CD8-positive, alpha-beta memory T cell (primary cell): ENCODE measurements at regions of chr16 and their contacts with region 1.

Region 1: GRCh38 chr16:30445408-30446202 is at the start of gene SEPHS2:
- DNase-seq: peak; percentile 91 to 98 (median 92)
- H3K4me3 ChIP-seq: peak within 1 kb of the TSS; percentile 92
- H3K4me3 Mint-ChIP-seq: peak within 1 kb of the TSS; percentile 88 to 97 (median 95)
- H3K27ac ChIP-seq: peak within 1 kb of the TSS; percentile 93
- H3K27ac Mint-ChIP-seq: peak within 1 kb of the TSS; percentile 87 to 96 (median 94)
- H3K4me1 ChIP-seq: peaks cover 40% of the 10 kb centered on the region
- H3K4me1 Mint-ChIP-seq: peaks cover 37 to 50% (median 45%) of the 10 kb centered on the region in 3 donors
- H3K27me3 ChIP-seq: no peaks in the 10 kb centered on the region
- H3K27me3 Mint-ChIP-seq: peaks cover 0 to 1% of the 10 kb centered on the region in 2 donors
- total RNA-seq, gene SEPHS2: 68.2 to 71.0 TPM

Region 2: DNA sequence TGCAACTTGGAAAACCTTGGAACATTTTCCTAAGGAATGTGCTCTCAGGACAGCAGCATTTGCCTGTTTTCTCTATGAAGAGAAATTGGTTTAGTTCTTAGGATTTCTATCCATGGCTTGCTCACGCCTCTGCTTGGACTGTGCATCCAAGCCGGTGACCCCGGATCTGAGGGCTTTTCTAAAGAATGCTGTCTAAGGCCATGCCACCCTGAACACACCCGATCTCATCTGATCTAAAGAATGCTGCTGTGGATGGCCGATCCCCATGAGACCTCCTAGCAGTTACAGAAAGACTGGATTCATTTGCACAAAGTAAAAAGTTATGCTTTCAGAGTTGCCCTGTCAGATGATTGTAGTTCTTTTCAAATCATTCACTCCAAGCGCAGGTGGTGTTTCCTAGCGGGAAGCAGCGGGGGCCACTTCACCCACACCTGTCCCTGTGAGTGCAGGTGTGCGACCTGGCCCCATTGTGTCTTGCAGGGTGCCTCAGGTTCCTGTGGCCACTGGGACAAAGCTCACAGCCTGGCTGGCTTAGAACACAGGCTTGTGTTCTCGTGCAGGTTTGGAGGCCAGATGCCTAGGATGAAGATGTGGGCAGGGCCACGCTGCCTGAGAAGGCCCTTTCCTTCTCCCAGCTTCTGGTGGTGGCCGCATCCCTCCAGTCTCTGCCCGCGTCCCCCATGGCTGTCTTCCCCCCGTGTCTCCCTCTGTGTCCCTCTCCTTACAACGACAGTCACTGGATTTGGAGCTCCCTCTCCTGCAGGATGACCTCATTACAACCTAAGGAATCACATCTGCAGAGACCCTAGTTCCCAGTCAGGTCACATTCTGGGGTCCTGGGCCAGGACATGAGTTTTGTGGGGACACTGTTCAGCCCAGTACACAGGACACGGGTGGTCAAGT is 1129.7 kb before region 1 on chr16:
- CTCF ChIA-PET with region 1: no interaction called
- POLR2A ChIA-PET with region 1: no interaction called
- DNase-seq: no peak
- H3K4me3 ChIP-seq: no peak overlapping the region
- H3K4me3 Mint-ChIP-seq: no peak overlapping the region
- H3K27ac ChIP-seq: no peak overlapping the region
- H3K27ac Mint-ChIP-seq: peak overlapping the region in 1 of 8 donors; percentile 19
- H3K4me1 ChIP-seq: no peaks in the 10 kb centered on the region
- H3K4me1 Mint-ChIP-seq: no peaks in the 10 kb centered on the region
- H3K27me3 ChIP-seq: no peaks in the 10 kb centered on the region
- H3K27me3 Mint-ChIP-seq: no peaks in the 10 kb centered on the region

Region 3: GRCh38 chr16:29805378-29806098 is 640.1 kb before region 1 on chr16:
- CTCF ChIA-PET with region 1: no interaction called
- POLR2A ChIA-PET with region 1: no interaction called
- DNase-seq: peak; percentile 97 to 99 (median 97)
- H3K4me3 ChIP-seq: peak overlapping the region; percentile 87
- H3K4me3 Mint-ChIP-seq: peak overlapping the region; percentile 93 to 100 (median 98)
- H3K27ac ChIP-seq: peak overlapping the region; percentile 95
- H3K27ac Mint-ChIP-seq: peak overlapping the region; percentile 94 to 100 (median 99)
- H3K4me1 ChIP-seq: peaks cover 36% of the 10 kb centered on the region
- H3K4me1 Mint-ChIP-seq: peaks cover 41 to 47% (median 47%) of the 10 kb centered on the region in 3 donors
- H3K27me3 ChIP-seq: no peaks in the 10 kb centered on the region
- H3K27me3 Mint-ChIP-seq: peaks cover 0 to 4% of the 10 kb centered on the region in 2 donors

Region 4: DNA sequence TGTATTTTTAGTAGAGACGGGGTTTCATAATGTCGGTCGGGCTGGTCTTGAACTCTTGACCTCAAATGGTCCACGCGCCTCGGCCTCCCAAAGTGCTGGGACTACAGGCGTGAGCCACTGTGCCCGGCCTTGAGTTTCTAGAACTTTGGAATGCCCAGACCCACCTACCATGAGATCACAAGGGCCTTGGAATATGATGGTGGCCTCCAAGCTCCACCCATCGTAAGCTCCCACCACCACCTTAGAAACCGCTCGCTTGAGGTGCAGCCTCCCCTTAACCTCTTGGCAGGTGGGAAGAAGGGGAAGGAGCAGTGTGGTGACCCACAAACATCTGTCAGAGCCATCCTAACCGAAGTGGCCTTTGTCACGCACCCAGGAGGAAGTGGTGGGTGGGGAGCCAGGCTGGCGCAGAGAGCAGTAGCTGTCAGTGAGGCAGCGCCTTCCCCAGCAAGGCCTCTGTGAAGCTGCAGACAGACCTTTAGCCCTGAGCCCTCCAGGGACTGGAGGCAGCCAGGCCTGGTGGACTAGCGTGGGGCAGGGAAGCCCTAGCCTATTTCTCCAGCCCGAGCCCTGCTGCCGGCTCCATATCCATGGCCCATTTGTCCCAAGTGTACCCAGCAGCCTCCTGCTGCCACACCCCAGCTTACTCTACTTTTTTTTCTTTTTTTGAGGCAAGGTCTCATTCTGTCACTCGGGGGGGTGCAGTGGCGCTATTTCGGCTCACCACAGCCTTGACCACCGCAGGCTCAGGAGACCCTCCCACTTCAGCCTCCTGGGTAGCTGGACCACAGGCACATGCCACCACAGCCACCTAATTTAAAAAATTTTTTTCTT is 13.2 kb after region 1 on chr16:
- CTCF ChIA-PET with region 1: interaction called, 32 read pairs
- POLR2A ChIA-PET with region 1: interaction called, 15 read pairs
- DNase-seq: peak; percentile 50 to 89 (median 71)
- H3K4me3 ChIP-seq: peak overlapping the region; percentile 18
- H3K4me3 Mint-ChIP-seq: peak overlapping the region; percentile 41 to 82 (median 70)
- H3K27ac ChIP-seq: no peak overlapping the region
- H3K27ac Mint-ChIP-seq: peak overlapping the region; percentile 68 to 95 (median 89)
- H3K4me1 ChIP-seq: peaks cover 25% of the 10 kb centered on the region
- H3K4me1 Mint-ChIP-seq: peaks cover 41 to 72% (median 63%) of the 10 kb centered on the region in 3 donors
- H3K27me3 ChIP-seq: no peaks in the 10 kb centered on the region
- H3K27me3 Mint-ChIP-seq: no peaks in the 10 kb centered on the region

Region 5: GRCh38 chr16:30482366-30482765 is 36.8 kb after region 1 on chr16:
- CTCF ChIA-PET with region 1: interaction called, 28 read pairs
- POLR2A ChIA-PET with region 1: interaction called, 6 read pairs
- DNase-seq: no peak
- H3K4me3 ChIP-seq: no peak overlapping the region
- H3K4me3 Mint-ChIP-seq: peak overlapping the region in 5 of 7 donors; percentile 2 to 57 (median 26)
- H3K27ac ChIP-seq: no peak overlapping the region
- H3K27ac Mint-ChIP-seq: peak overlapping the region; percentile 34 to 90 (median 77)
- H3K4me1 ChIP-seq: peaks cover 38% of the 10 kb centered on the region
- H3K4me1 Mint-ChIP-seq: peaks cover 42 to 69% (median 57%) of the 10 kb centered on the region in 3 donors
- H3K27me3 ChIP-seq: no peaks in the 10 kb centered on the region
- H3K27me3 Mint-ChIP-seq: no peaks in the 10 kb centered on the region

Region 6: DNA sequence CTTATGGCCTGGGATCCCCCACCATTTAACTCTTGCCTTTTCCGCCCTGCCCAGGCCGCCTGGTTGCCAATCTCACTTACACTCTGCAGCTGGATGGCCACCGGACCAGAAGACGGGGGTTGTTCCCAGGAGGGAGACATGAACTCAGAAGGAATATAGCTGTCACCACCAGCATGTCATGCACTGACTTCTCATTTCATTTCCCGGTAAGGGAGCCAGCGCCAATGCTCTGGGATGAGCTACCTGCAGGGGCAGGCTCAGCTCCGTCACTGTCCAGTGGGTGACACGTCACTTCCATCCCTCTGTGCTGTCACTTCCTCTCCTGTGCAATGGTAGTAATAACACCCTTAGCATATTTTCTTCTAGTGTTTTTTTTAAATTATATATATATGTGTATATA is 53.7 kb after region 1 on chr16:
- CTCF ChIA-PET with region 1: interaction called, 27 read pairs
- POLR2A ChIA-PET with region 1: interaction called, 5 read pairs
- DNase-seq: no peak
- H3K4me3 ChIP-seq: no peak overlapping the region
- H3K4me3 Mint-ChIP-seq: no peak overlapping the region
- H3K27ac ChIP-seq: peak overlapping the region; percentile 51
- H3K27ac Mint-ChIP-seq: peak overlapping the region in 6 of 8 donors; percentile 23 to 51 (median 44)
- H3K4me1 ChIP-seq: no peaks in the 10 kb centered on the region
- H3K4me1 Mint-ChIP-seq: peaks cover 8 to 14% (median 12%) of the 10 kb centered on the region in 3 donors
- H3K27me3 ChIP-seq: no peaks in the 10 kb centered on the region
- H3K27me3 Mint-ChIP-seq: peaks cover 0 to 2% of the 10 kb centered on the region in 2 donors

Region 7: GRCh38 chr16:30628627-30629540 is 183.3 kb after region 1 on chr16:
- CTCF ChIA-PET with region 1: interaction called, 10 read pairs
- POLR2A ChIA-PET with region 1: no interaction called
- DNase-seq: peak; percentile 62 to 88 (median 79)
- H3K4me3 ChIP-seq: peak overlapping the region; percentile 51
- H3K4me3 Mint-ChIP-seq: peak overlapping the region; percentile 44 to 78 (median 63)
- H3K27ac ChIP-seq: no peak overlapping the region
- H3K27ac Mint-ChIP-seq: peak overlapping the region in 7 of 8 donors; percentile 30 to 92 (median 65)
- H3K4me1 ChIP-seq: peaks cover 15% of the 10 kb centered on the region
- H3K4me1 Mint-ChIP-seq: peaks cover 4 to 8% (median 7%) of the 10 kb centered on the region in 3 donors
- H3K27me3 ChIP-seq: no peaks in the 10 kb centered on the region
- H3K27me3 Mint-ChIP-seq: peaks cover 0 to under 1% of the 10 kb centered on the region in 2 donors